Activated CD4-positive, alpha-beta T cell treated with anti-CD3 and anti-CD28 coated beads, Interleukin-2, amount 10 ng/mL, durations not matched to agents 24 days and 14 days (primary cell): ENCODE measurements at regions of chr2 and their contacts with region 1.

Region 1: DNA sequence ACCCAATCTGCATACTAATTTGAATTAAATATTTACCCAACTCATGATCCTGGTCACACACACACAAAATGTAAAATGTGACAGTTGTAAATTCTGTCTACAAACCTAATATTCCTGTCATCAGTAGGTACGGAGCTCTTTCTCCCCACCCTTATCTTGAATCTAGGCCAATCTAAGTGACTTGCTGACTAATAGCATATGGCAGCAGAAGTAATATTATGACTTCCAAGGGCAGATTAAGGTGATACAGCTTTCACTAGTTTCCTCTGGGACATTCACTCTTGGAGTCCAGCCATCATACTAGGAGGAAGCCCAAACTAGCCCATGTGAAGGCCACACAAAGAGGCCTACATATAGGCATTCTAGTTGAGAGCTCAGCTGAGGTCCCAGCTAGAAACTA is 89.4 kb downstream of the TMEM131 start:
- DNase-seq: no peak
- H3K4me3 Mint-ChIP-seq: no peak overlapping the region
- H3K27ac Mint-ChIP-seq: no peak overlapping the region
- H3K4me1 Mint-ChIP-seq: peaks cover 7% of the 10 kb centered on the region
- H3K27me3 Mint-ChIP-seq: no peaks in the 10 kb centered on the region

Region 2: DNA sequence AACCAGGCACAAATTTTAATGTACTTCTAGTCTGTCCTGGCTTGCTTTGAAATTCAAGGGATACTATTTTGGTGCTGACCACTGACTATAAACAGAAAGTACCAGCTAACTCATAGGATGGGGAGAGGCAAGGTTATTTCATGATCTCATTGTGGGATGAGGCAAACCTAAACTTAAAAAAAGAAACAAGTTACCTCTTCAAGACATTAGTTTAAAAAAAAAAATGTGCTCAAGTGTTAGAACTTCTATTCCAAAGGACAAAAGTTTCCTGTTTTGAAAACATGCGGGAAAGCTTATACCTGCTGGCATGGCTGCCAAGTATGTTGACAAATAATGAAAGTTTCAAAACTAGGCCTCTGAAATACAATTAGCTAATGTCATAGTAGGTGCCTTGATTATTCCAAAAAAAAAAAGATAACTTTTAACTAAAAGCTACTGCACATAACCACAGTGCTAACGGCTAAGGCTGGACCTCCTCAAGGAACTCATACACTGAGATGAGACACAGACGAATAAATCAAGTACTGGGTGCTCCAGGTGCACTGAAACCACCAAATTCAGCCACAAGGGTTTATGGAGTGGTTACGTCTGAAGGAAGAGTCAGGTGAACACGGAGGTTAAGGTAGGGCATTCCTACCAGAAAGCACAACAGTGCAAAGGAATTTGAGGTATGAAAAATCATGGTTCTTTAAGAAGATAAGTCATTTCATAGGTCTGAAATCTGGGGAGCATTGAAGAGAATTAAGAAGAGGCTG is 51.3 kb after region 1 on chr2:
- intact Hi-C with region 1: loop called (anchors 5 kb)
- DNase-seq: no peak
- H3K4me3 Mint-ChIP-seq: no peak overlapping the region
- H3K27ac Mint-ChIP-seq: no peak overlapping the region
- H3K4me1 Mint-ChIP-seq: peaks cover 24% of the 10 kb centered on the region
- H3K27me3 Mint-ChIP-seq: no peaks in the 10 kb centered on the region

Region 3: GRCh38 chr2:97982621-97983020 is 76.3 kb after region 1 on chr2:
- intact Hi-C with region 1: no loop called
- DNase-seq: no peak
- H3K4me3 Mint-ChIP-seq: no peak overlapping the region
- H3K27ac Mint-ChIP-seq: no peak overlapping the region
- H3K4me1 Mint-ChIP-seq: peaks cover 2% of the 10 kb centered on the region
- H3K27me3 Mint-ChIP-seq: no peaks in the 10 kb centered on the region